Ovary (tissue), 10 donors: ENCODE measurements at regions of chr1 and their contacts with region 1.

Region 1: GRCh38 chr1:177448781-177449314 is 278.1 kb downstream of the BRINP2 start:
- DNase-seq: no peak
- H3K4me3 ChIP-seq: no peak overlapping the region
- H3K27ac ChIP-seq: no peak overlapping the region
- H3K4me1 ChIP-seq: no peaks in the 10 kb centered on the region
- H3K27me3 ChIP-seq: no peaks in the 10 kb centered on the region
- CTCF ChIP-seq: no peak
- EP300 ChIP-seq: no peak
- POLR2A ChIP-seq: no peak

Region 2: GRCh38 chr1:178066908-178067614 is 618.2 kb after region 1 on chr1:
- intact Hi-C with region 1: loop called in 1 of 4 experiments (anchors 5 kb)
- DNase-seq: no peak
- H3K4me3 ChIP-seq: no peak overlapping the region
- H3K27ac ChIP-seq: no peak overlapping the region
- H3K4me1 ChIP-seq: no peaks in the 10 kb centered on the region
- H3K27me3 ChIP-seq: no peaks in the 10 kb centered on the region
- CTCF ChIP-seq: no peak
- EP300 ChIP-seq: no peak
- POLR2A ChIP-seq: no peak